Psoas muscle (tissue), 8 donors: ENCODE measurements at regions of chr19 and their contacts with region 1.

Region 1: DNA sequence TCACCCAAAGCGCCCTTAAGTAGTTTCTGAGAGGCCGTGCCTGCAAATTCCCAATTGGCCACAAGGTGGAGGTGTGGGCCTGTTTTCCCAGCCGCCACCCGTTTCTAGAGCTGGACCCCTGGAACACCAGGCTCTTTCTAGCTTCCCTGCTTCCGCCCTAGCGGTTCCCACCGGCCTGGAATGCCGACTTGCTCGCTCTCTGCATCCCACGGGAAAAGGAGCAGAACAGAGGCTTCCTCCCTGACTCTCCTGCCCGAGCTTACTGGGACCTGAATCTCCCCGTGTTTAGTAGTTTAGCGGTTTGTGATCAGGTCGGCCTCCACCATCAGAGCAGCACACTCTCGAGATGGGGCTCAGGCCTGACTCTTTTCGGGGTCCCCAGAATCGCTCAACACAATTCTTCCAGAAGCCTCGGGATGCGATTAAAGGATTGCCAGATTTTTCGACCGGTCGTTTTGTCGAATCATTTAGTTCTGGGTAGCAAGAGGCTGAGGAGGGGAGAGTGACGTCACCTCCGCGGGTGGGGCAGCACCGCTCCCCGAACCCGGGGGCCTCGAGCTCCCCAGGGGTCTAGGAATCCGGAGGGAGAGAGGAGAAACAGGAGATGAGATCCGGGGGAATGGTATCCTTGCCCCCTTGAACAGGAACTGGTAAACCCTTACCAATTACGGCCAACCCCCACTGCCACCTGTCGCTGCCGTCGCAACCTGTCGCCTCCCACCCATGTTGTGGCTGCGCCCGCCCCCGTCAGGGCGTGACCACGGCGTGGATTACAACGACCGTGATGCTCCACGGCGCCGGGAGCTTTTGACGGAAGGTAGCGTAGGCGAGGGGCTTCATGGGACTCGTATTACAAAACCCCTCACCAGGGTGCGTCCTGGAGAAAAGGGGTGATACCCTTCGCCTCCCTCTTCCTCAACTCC is 8.0 kb downstream of the NAPSA start:
- DNase-seq: peak; percentile 73 to 84
- ATAC-seq: peak; percentile 74 to 89 (median 86)
- H3K4me3 ChIP-seq: peak overlapping the region; percentile 65
- H3K27ac ChIP-seq: peak overlapping the region; percentile 67
- H3K4me1 ChIP-seq: peaks cover 7% of the 10 kb centered on the region
- H3K27me3 ChIP-seq: no peaks in the 10 kb centered on the region
- CTCF ChIP-seq: peak; percentile 84

Region 2: GRCh38 chr19:50214761-50215575 is 142.5 kb before region 1 on chr19:
- intact Hi-C with region 1: no loop called
- DNase-seq: no peak
- ATAC-seq: peak; percentile 23 to 72 (median 56)
- H3K4me3 ChIP-seq: no peak overlapping the region
- H3K27ac ChIP-seq: no peak overlapping the region
- H3K4me1 ChIP-seq: no peaks in the 10 kb centered on the region
- H3K27me3 ChIP-seq: no peaks in the 10 kb centered on the region
- CTCF ChIP-seq: no peak

Region 3: DNA sequence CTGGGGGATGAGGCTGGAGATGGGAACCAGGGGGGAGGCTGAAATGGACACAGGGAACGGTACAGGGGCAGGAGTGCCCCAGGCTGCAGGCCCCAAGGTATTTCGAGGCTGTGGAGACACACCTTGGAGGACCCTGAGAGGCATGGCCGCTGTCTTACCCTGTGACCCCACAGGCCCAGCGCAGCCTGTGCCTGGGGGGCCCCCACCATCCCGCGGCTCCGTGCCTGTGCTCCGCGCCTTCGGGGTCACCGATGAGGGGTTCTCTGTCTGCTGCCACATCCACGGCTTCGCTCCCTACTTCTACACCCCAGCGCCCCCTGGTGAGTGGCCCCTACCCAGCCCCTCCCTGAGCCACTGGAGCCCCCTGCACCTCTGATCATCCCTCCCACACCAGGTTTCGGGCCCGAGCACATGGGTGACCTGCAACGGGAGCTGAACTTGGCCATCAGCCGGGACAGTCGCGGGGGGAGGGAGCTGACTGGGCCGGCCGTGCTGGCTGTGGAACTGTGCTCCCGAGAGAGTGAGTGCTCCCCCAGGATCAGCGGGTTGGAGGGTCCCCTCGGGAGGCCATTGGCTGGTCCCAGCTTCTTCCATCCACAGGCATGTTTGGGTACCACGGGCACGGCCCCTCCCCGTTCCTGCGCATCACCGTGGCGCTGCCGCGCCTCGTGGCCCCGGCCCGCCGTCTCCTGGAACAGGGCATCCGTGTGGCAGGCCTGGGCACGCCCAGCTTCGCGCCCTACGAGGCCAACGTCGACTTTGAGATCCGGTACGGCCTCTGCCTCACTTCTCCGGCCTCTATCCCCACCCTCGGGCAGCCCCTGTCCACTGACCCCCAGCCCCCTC is 44.4 kb after region 1 on chr19:
- intact Hi-C with region 1: no loop called
- DNase-seq: no peak
- ATAC-seq: no peak
- H3K4me3 ChIP-seq: no peak overlapping the region
- H3K27ac ChIP-seq: no peak overlapping the region
- H3K4me1 ChIP-seq: no peaks in the 10 kb centered on the region
- H3K27me3 ChIP-seq: no peaks in the 10 kb centered on the region
- CTCF ChIP-seq: no peak

Region 4: GRCh38 chr19:50414864-50415660 is 57.6 kb after region 1 on chr19:
- intact Hi-C with region 1: loop called in 1 of 2 experiments (anchors 5 kb)
- DNase-seq: peak; percentile 81 to 87
- ATAC-seq: peak; percentile 78 to 89 (median 84)
- H3K4me3 ChIP-seq: no peak overlapping the region
- H3K27ac ChIP-seq: no peak overlapping the region
- H3K4me1 ChIP-seq: peaks cover 7% of the 10 kb centered on the region
- H3K27me3 ChIP-seq: peaks cover 0 to 10% (median 4%) of the 10 kb centered on the region in 3 donors
- CTCF ChIP-seq: peak; percentile 80

Region 5: DNA sequence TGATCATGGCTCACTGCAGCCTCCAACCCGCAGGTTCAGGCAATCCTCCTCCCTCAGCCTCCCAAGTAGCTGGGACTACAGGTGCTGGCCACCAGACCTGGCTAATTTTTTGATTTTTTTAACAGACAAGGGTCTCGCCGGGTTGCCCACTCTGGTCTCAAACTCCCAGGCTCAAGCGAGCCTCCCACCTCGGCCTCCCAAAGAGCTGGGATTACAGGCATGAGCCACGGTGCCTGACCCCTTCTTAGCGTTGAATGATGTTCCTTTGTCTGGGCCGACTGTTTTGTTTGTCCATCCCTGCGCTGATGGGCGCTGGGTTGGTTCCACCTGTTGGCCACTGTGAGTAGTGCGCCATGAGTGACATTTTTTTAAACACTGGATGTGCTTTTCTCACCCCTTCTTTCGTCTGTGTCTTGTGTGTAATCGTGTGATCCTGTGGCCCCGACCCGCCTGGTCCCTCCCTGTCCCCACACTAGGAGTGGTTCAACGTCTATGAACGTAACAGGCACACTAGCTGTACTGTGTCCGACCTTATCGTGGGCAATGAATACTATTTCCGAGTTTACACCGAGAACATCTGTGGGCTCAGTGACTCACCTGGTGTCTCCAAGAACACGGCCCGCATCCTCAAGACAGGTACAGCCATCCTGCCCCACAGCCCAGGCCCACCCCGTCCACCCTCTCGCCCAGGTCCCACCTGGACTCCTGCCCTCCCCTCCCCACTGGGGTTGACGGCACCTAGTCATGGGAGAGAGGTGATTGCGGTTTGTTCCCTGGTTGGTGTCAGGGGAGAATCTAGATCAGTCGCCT is 103.8 kb after region 1 on chr19:
- intact Hi-C with region 1: loop called in 1 of 2 experiments (anchors 5 kb)
- DNase-seq: peak; percentile 50 to 68
- ATAC-seq: peak; percentile 53 to 76 (median 69)
- H3K4me3 ChIP-seq: no peak overlapping the region
- H3K27ac ChIP-seq: no peak overlapping the region
- H3K4me1 ChIP-seq: peaks cover 9% of the 10 kb centered on the region
- H3K27me3 ChIP-seq: peaks cover 0 to 13% (median 2%) of the 10 kb centered on the region in 3 donors
- CTCF ChIP-seq: peak; percentile 76

Region 6: DNA sequence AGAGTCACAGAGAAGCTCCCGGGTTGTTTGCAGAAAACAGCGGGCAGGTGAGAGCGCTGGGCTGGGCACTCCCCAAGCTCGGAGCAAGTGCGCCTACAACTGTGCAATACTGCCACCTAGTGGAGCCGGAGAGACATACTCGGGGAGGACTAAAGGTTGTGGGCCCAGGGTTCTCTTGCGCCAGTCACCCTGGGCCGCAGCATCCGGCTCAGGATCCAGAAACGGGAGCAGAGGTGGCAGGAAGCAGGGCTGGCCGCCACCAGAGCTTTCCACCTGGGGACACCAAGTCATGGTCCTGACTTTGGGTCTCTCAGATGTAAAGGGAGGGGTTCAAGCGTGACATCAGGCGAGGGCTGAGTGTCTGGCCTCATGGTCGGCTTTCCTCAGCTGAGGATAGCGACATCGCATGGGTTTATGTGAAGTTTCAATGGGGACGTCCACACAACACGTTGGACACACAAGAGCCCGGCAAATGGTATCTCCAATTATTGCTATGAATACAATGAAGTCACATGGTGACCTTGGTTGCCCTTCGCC is 564.9 kb after region 1 on chr19:
- intact Hi-C with region 1: loop called in 1 of 2 experiments (anchors 5 kb)
- DNase-seq: peak; percentile 44 to 67
- ATAC-seq: peak in 1 of 4 donors; percentile 67
- H3K4me3 ChIP-seq: no peak overlapping the region
- H3K27ac ChIP-seq: no peak overlapping the region
- H3K4me1 ChIP-seq: no peaks in the 10 kb centered on the region
- H3K27me3 ChIP-seq: peaks cover 0 to 2% (median 0%) of the 10 kb centered on the region in 3 donors
- CTCF ChIP-seq: peak; percentile 55